H1 (cell line): ENCODE measurements at regions of chr2 and their contacts with region 1.

Region 1: GRCh38 chr2:226984750-226985582 is 149.1 kb downstream of the RHBDD1 start:
- DNase-seq: no peak
- H3K4me3 ChIP-seq: no peak overlapping the region
- H3K27ac ChIP-seq: no peak overlapping the region
- H3K4me1 ChIP-seq: peaks cover 0 to 9% (median 0%) of the 10 kb centered on the region in 4 experiments; a peak in 1 of 7 replicates
- H3K27me3 ChIP-seq: no peaks in the 10 kb centered on the region
- CTCF ChIP-seq: peak in 2 of 3 experiments; percentile 52 to 61; a peak in 2 of 4 replicates
- EP300 ChIP-seq: no peak
- POLR2A ChIP-seq: no peak
- RAD21 ChIP-seq: peak; percentile 79 to 86

Region 2: GRCh38 chr2:226813148-226813701 is 171.7 kb before region 1 on chr2:
- CTCF ChIA-PET with region 1: interaction called, 33 read pairs
- POLR2A ChIA-PET with region 1: no interaction called
- DNase-seq: no peak
- H3K4me3 ChIP-seq: no peak overlapping the region
- H3K27ac ChIP-seq: no peak overlapping the region
- H3K4me1 ChIP-seq: peaks cover 0 to 3% (median 0%) of the 10 kb centered on the region in 4 experiments; a peak in 1 of 7 replicates
- H3K27me3 ChIP-seq: no peaks in the 10 kb centered on the region
- CTCF ChIP-seq: peak in 2 of 3 experiments; percentile 59 to 84; a peak in 3 of 4 replicates
- EP300 ChIP-seq: no peak
- POLR2A ChIP-seq: no peak
- RAD21 ChIP-seq: peak; percentile 87

Region 3: GRCh38 chr2:226995625-226996041 is 10.7 kb after region 1 on chr2:
- CTCF ChIA-PET with region 1: interaction called, 10 read pairs
- POLR2A ChIA-PET with region 1: no interaction called
- DNase-seq: no peak
- H3K4me3 ChIP-seq: no peak overlapping the region
- H3K27ac ChIP-seq: no peak overlapping the region
- H3K4me1 ChIP-seq: no peaks in the 10 kb centered on the region
- H3K27me3 ChIP-seq: no peaks in the 10 kb centered on the region
- CTCF ChIP-seq: no peak
- EP300 ChIP-seq: no peak
- POLR2A ChIP-seq: no peak
- RAD21 ChIP-seq: no peak

Region 4: DNA sequence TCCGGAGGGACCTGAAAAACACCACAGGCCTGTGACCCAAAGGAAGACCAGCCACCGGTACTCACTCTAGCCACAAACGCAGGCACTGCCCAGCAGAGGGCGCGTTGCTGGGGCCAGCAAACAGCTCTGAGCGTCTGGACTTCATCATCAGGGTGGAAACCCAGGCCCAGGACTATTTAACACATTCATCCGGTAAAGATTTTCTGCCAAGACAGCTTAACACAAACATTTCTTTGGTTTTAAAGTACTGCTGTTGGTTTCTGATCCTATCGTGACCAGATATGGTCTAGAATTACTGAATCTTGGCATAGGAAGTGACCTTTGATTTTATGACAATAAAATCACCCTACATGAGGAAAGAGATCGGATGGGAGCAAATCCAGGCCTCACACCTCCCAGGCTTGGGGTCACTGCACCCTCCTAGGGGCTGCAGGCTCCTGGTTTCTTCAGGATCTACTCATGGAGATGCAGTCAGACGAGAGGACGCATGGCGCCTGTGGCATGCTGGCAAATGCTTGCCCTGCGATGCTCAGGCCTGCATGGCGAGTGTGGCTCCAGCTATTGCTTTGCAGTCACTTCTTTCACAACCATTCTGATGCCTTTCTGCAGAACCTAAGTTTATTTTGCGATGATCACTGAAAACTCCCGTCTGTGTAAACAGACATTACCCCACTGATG is 48.6 kb after region 1 on chr2:
- CTCF ChIA-PET with region 1: interaction called, 11 read pairs
- POLR2A ChIA-PET with region 1: no interaction called
- DNase-seq: peak; percentile 66 to 86
- H3K4me3 ChIP-seq: no peak overlapping the region
- H3K27ac ChIP-seq: no peak overlapping the region
- H3K4me1 ChIP-seq: no peaks in the 10 kb centered on the region
- H3K27me3 ChIP-seq: no peaks in the 10 kb centered on the region
- CTCF ChIP-seq: peak; percentile 85 to 98 (median 97)
- EP300 ChIP-seq: no peak
- POLR2A ChIP-seq: no peak
- RAD21 ChIP-seq: peak; percentile 73 to 81